PC-3 (cell line): ENCODE measurements at regions of chr5 and their contacts with region 1.

Region 1: GRCh38 chr5:39547553-39548154 is 122.9 kb upstream of the DAB2 start:
- DNase-seq: peak; percentile 92
- ATAC-seq: peak; percentile 71
- H3K4me3 ChIP-seq: peak overlapping the region; percentile 25; the same call in 1 of the 2 replicates
- H3K27ac ChIP-seq: no peak overlapping the region
- H3K4me1 ChIP-seq: peaks cover 4% of the 10 kb centered on the region; the same call in 1 of the 2 replicates
- H3K27me3 ChIP-seq: no peaks in the 10 kb centered on the region
- CTCF ChIP-seq: peak; percentile 94

Region 2: DNA sequence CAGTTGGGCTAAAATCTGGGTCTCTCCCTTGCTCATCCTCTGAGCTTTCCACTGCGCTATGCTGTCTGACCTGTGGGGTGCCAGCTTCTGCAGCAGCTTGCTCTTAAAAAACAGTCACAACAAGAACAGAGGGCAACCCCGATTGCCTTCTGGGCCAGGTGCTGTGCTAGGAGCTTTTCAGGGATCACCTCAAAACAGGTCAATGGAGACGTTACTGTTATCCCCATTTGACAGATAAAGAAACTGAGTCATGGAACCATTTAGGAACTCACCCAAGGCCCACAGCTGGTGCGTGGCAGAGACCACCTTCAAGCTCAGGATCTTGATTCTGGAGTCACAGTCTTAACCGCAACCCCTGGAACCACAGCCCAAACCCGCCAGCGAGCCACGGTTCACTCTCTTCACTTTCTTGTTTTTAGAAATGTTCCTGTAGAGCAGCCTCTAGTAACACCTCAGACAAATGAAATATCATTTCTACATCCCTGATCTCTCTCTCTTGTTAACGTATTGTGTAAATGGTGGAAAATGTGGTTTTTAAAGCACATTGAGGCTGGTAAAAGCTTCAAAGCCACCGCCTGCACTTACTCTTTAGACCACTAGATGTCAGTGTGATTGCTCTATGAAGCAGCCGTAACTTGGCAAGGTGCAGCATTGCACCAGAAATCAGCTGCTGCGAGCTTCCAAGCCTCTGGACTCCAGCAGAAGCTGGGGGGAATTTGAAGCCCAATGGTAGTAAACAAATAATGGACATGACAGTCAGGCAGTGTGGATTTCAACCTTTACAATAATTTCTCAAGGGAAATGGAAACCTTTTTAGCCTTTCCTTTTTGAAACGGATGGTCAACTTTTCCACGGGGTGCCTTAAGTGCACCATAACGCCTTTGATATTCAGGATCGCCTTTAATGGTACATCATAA is 330.0 kb before region 1 on chr5:
- CTCF ChIA-PET with region 1: no interaction called
- POLR2A ChIA-PET with region 1: no interaction called
- intact Hi-C with region 1: loop called (anchors 1 kb)
- DNase-seq: peak; percentile 95
- ATAC-seq: peak; percentile 39; the same call in 1 of the 2 replicates
- H3K4me3 ChIP-seq: no peak overlapping the region
- H3K27ac ChIP-seq: no peak overlapping the region
- H3K4me1 ChIP-seq: peaks cover 25% of the 10 kb centered on the region
- H3K27me3 ChIP-seq: no peaks in the 10 kb centered on the region
- CTCF ChIP-seq: peak; percentile 99

Region 3: GRCh38 chr5:39501397-39501796 is 46.3 kb before region 1 on chr5:
- CTCF ChIA-PET with region 1: interaction called, 10 read pairs
- POLR2A ChIA-PET with region 1: no interaction called
- intact Hi-C with region 1: no loop called
- DNase-seq: peak; percentile 81
- ATAC-seq: peak; percentile 92
- H3K4me3 ChIP-seq: peak overlapping the region; percentile 43; the same call in 1 of the 2 replicates
- H3K27ac ChIP-seq: peak overlapping the region; percentile 79
- H3K4me1 ChIP-seq: peaks cover 32% of the 10 kb centered on the region
- H3K27me3 ChIP-seq: no peaks in the 10 kb centered on the region
- CTCF ChIP-seq: no peak